T-cell (primary cell): ENCODE measurements at regions of chr2 and their contacts with region 1.

Region 1: GRCh38 chr2:172554352-172555271 is 1.3 kb upstream of the PDK1 start:
- DNase-seq: peak in 2 of 35 experiments; percentile 16 to 21
- ATAC-seq: no peak
- H3K4me3 ChIP-seq: peak overlapping the region; percentile 15 to 81
- H3K4me3 Mint-ChIP-seq: peak overlapping the region; percentile 88 to 95 (median 92)
- H3K27ac ChIP-seq: no peak overlapping the region
- H3K27ac Mint-ChIP-seq: peak overlapping the region; percentile 40 to 58
- H3K4me1 ChIP-seq: peaks cover 26 to 35% of the 10 kb centered on the region in 2 experiments
- H3K4me1 Mint-ChIP-seq: peaks cover 56 to 68% (median 65%) of the 10 kb centered on the region in 3 donors
- H3K27me3 ChIP-seq: no peaks in the 10 kb centered on the region
- H3K27me3 Mint-ChIP-seq: no peaks in the 10 kb centered on the region

Region 2: DNA sequence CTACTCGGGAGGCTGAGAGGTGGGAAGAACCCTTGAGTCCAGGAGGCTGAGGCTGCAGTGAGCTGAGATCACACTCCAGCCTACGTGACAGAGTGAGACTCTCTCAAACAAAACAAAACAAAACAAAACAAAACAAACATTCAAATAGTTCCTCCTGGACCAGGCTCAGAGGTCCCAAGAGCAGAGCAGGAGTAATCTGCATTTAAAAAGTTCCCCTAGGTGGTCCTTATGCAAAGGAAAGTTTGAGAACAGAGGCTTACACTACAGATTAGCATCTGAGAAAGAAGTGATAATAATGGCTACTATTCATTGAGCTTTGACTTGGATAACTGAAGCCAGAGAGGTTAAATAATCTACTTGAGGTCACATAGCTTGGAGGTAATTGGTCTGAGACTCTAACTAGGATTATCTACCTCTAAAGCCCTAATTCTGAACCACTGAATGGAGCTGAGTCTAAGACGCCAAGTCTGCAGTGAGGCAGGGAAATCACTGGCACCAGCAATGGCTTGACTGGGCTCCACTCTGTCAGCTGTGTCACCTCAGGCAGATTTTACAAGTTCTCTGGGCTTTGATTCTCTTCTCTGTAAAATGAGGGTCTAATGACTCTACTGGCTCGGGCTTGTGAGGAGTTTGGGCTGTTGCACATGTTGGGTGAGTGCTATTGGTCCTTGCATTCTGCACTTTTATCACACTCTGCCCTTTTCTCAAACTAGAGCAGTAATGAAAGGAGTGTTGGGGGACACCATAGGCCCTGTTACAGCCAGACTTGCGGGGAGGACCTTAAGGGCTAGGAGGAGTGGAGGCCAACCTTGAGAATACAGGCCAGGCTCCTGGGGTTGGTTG is 422.7 kb before region 1 on chr2:
- CTCF ChIA-PET with region 1: no interaction called
- POLR2A ChIA-PET with region 1: no interaction called
- DNase-seq: no peak
- ATAC-seq: no peak
- H3K4me3 ChIP-seq: no peak overlapping the region
- H3K4me3 Mint-ChIP-seq: no peak overlapping the region
- H3K27ac ChIP-seq: no peak overlapping the region
- H3K27ac Mint-ChIP-seq: no peak overlapping the region
- H3K4me1 ChIP-seq: no peaks in the 10 kb centered on the region
- H3K4me1 Mint-ChIP-seq: no peaks in the 10 kb centered on the region
- H3K27me3 ChIP-seq: peaks cover 0 to 4% of the 10 kb centered on the region in 2 experiments
- H3K27me3 Mint-ChIP-seq: peaks cover 2 to 6% of the 10 kb centered on the region in 2 donors

Region 3: DNA sequence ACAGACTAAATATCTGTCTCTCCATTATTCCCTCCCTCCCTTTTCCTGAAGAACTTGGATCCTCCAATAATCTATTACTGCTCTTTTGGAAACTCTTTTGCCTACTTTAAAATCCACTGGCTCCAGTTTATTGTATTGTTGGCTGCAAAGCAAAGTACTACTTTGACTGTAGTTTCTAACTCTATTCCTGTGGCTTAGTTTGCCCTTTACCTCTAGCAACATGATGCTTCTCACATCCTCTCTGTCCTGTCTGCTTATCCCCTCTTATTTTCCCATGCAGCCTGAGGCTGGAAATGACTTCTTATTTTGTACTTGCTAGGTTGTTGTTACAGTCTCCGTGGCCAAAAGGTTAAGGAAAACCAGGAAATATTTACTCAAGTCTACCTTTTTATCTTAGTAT is 28.0 kb after region 1 on chr2:
- CTCF ChIA-PET with region 1: no interaction called
- POLR2A ChIA-PET with region 1: interaction called in 1 of 2 experiments, 18 read pairs
- DNase-seq: no peak
- ATAC-seq: no peak
- H3K4me3 ChIP-seq: no peak overlapping the region
- H3K4me3 Mint-ChIP-seq: no peak overlapping the region
- H3K27ac ChIP-seq: no peak overlapping the region
- H3K27ac Mint-ChIP-seq: no peak overlapping the region
- H3K4me1 ChIP-seq: peaks cover 5 to 14% of the 10 kb centered on the region in 2 experiments
- H3K4me1 Mint-ChIP-seq: peaks cover 45 to 49% (median 49%) of the 10 kb centered on the region in 3 donors
- H3K27me3 ChIP-seq: no peaks in the 10 kb centered on the region
- H3K27me3 Mint-ChIP-seq: no peaks in the 10 kb centered on the region